ENCODE measurements at regions of chr9 and their contacts with region 1.

Region 1: GRCh38 chr9:94867281-94867841 is 140.9 kb downstream of the AOPEP start:
- DNase-seq: peak in 4 of 5 donors; percentile 73 to 84 (median 76)
- ATAC-seq: peak; percentile 76 to 87 (median 84)
- H3K4me3 ChIP-seq: peak overlapping the region in 6 of 12 donors; percentile 2 to 22 (median 7)
- H3K27ac ChIP-seq: peak overlapping the region; percentile 70 to 98 (median 88)
- H3K4me1 ChIP-seq: peaks cover 10 to 83% (median 63%) of the 10 kb centered on the region in 12 donors
- H3K27me3 ChIP-seq: no peaks in the 10 kb centered on the region
- CTCF ChIP-seq: no peak
- POLR2A ChIP-seq: peak in 1 of 2 donors; percentile 45

Region 2: DNA sequence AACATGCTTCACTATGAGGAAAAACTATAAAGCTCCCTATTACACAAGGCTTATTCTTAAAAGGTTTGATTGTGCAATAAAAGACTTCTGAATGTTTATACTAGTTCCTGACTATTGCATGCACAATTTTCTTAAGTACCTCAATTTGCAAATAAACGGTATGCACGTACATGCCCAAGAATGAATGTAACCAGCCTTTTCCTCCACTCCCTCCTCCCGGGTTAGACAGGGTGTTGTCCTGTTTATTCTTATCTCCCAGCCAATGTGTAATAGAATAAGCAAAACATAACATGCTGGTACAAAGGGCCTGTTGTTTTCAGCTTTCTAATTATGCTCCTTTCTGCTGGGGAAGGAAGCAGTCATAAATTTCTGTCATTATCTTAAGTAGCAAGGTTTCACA is 61.8 kb before region 1 on chr9:
- intact Hi-C with region 1: loop called in 5 of 10 experiments (anchors 5 to 10 kb)
- DNase-seq: no peak
- ATAC-seq: peak in 2 of 4 donors; percentile 57 to 59
- H3K4me3 ChIP-seq: no peak overlapping the region
- H3K27ac ChIP-seq: peak overlapping the region in 9 of 12 donors; percentile 7 to 57 (median 16)
- H3K4me1 ChIP-seq: peaks cover 0 to 61% (median 46%) of the 10 kb centered on the region in 12 donors
- H3K27me3 ChIP-seq: no peaks in the 10 kb centered on the region
- CTCF ChIP-seq: no peak
- POLR2A ChIP-seq: no peak

Region 3: DNA sequence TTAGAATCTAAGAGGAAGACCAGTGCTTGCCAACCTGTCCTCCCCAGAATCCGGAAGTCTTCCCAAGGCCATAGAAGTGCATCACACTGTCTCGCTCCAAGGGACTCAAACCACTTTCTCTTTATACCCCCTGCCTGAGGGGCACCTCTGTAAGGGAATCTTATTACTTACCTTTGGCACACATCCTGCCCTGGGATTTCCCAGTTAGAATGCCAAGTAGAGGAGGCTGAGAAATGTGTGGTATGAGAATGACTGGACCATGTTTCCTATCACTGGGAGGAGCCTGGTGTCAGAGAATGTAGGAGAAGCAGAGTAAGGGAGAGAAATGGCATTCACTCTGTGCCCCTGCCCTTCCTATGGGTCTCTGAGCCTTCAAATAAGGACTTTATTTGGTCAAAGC is 55.0 kb before region 1 on chr9:
- intact Hi-C with region 1: loop called in 6 of 10 experiments (anchors 5 to 10 kb)
- DNase-seq: no peak
- ATAC-seq: peak in 3 of 4 donors; percentile 26 to 57 (median 28)
- H3K4me3 ChIP-seq: no peak overlapping the region
- H3K27ac ChIP-seq: peak overlapping the region in 7 of 12 donors; percentile 3 to 47 (median 31)
- H3K4me1 ChIP-seq: peaks cover 0 to 42% (median 24%) of the 10 kb centered on the region in 12 donors
- H3K27me3 ChIP-seq: no peaks in the 10 kb centered on the region
- CTCF ChIP-seq: no peak
- POLR2A ChIP-seq: no peak

Region 4: GRCh38 chr9:94945197-94946144 is 78.1 kb after region 1 on chr9:
- intact Hi-C with region 1: loop called in 3 of 10 experiments (anchors 5 to 10 kb)
- DNase-seq: peak; percentile 68 to 78 (median 72)
- ATAC-seq: peak; percentile 86 to 89 (median 88)
- H3K4me3 ChIP-seq: no peak overlapping the region
- H3K27ac ChIP-seq: peak overlapping the region in 9 of 12 donors; percentile 12 to 66 (median 53)
- H3K4me1 ChIP-seq: peaks cover 2 to 52% (median 33%) of the 10 kb centered on the region in 12 donors
- H3K27me3 ChIP-seq: no peaks in the 10 kb centered on the region
- CTCF ChIP-seq: no peak
- POLR2A ChIP-seq: no peak

Region 5: DNA sequence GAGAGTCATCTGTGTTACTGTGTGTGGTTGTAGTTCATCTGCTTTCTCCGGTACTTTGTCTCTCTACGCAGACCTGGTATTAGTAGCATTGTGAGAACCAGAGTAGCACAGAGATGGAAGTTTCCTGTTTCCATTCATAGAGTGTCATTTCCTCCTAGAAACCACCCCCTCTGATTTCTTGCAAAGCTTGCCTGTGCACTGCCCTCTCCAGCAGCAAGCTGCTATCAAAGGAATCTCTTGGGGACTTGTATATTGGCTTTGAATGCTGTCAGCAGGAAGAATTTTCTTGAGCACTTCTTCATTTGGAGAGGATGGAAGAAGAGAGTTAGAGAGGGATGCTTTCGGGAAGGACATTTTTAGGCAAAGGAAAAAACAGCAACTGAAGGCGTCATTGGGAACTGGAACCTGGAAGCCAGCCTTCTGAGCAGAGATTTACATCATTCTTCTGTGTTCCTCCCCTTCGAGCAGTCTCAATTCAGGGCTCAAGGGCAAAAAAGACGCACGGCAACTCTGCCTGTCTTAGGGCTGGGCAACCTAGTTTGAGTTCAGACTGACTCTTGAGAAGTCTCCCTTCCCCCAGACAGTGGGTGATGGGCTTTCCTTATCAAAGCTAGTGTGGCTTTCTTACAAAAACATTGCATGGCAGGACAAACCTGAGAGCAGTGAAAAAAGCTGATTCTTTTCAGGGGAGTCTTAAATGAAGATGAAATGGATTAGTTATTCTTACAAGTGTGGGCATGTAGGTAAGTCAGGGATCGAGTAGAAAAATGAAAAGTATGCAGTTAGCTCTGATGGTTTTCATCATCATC is 85.4 kb after region 1 on chr9:
- intact Hi-C with region 1: loop called in 3 of 10 experiments (anchors 5 to 10 kb)
- DNase-seq: peak in 2 of 5 donors; percentile 46 to 65
- ATAC-seq: peak; percentile 23 to 77 (median 56)
- H3K4me3 ChIP-seq: peak overlapping the region in 3 of 12 donors; percentile 1 to 15 (median 2)
- H3K27ac ChIP-seq: peak overlapping the region; percentile 43 to 88 (median 74)
- H3K4me1 ChIP-seq: peaks cover 10 to 56% (median 47%) of the 10 kb centered on the region in 12 donors
- H3K27me3 ChIP-seq: no peaks in the 10 kb centered on the region
- CTCF ChIP-seq: no peak
- POLR2A ChIP-seq: no peak

Measured in heart left ventricle (tissue), 16 donors.